ENCODE measurements at regions of chr16 and their contacts with region 1.

Region 1: GRCh38 chr16:50273681-50274325 is 7.5 kb downstream of the ADCY7 start:
- DNase-seq: peak; percentile 64
- ATAC-seq: peak; percentile 80
- H3K4me3 ChIP-seq: peak overlapping the region; percentile 70
- H3K27ac ChIP-seq: peak overlapping the region; percentile 93
- H3K4me1 ChIP-seq: peaks cover 49% of the 10 kb centered on the region
- H3K27me3 ChIP-seq: no peaks in the 10 kb centered on the region
- CTCF ChIP-seq: no peak
- EP300 ChIP-seq: peak in 1 of 2 experiments; percentile 47; a peak in 2 of 4 replicates
- POLR2A ChIP-seq: peak; percentile 59
- RAD21 ChIP-seq: no peak

Region 2: DNA sequence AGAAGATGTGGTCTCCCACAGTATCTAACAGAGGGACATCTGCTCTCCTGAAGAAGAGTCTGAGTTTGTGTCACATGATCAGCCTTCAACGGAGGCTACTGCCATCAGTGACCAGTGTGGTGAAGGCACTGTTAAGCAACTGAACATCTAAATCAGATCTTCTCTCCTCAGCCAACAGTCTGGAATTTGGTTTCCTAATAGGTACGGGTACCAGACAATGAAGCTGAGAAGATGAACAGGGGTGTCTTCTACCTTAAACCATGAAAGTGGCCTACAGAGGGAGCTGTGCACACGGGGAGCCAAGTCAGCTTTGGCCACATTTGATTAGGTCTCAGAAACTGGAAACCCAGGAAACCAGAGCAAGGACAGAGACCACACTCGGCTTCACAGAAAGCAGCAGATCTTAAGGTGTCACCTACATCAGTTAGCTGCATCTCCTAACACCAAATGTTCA is 53.2 kb after region 1 on chr16:
- CTCF ChIA-PET with region 1: interaction called, 13 read pairs
- POLR2A ChIA-PET with region 1: interaction called, 6 read pairs
- RAD21 ChIA-PET with region 1: interaction called, 3 read pairs
- SMC1A ChIA-PET with region 1: interaction called, 4 read pairs
- in situ Hi-C with region 1: no loop called
- intact Hi-C with region 1: no loop called
- DNase-seq: peak; percentile 25
- ATAC-seq: peak; percentile 93
- H3K4me3 ChIP-seq: no peak overlapping the region
- H3K27ac ChIP-seq: no peak overlapping the region; the same call in 1 of the 2 replicates
- H3K4me1 ChIP-seq: peaks cover 3% of the 10 kb centered on the region; the same call in 1 of the 2 replicates
- H3K27me3 ChIP-seq: no peaks in the 10 kb centered on the region
- CTCF ChIP-seq: peak; percentile 45 to 76 (median 55)
- EP300 ChIP-seq: no peak
- POLR2A ChIP-seq: no peak
- RAD21 ChIP-seq: peak; percentile 72